ENCODE measurements at regions of chr19 and their contacts with region 1.

Region 1: GRCh38 chr19:45478454-45479238 is 10.8 kb downstream of the FOSB start:
- DNase-seq: peak; percentile 96
- H3K4me3 ChIP-seq: peak overlapping the region; percentile 51 to 67 (median 52)
- H3K27ac ChIP-seq: peak overlapping the region; percentile 91 to 92 (median 92)
- H3K4me1 ChIP-seq: peaks cover 10 to 16% (median 14%) of the 10 kb centered on the region in 4 donors
- H3K27me3 ChIP-seq: no peaks in the 10 kb centered on the region
- CTCF ChIP-seq: peak; percentile 97 to 100 (median 97)
- EP300 ChIP-seq: no peak
- POLR2A ChIP-seq: no peak

Region 2: GRCh38 chr19:45428384-45429231 is 50.0 kb before region 1 on chr19:
- intact Hi-C with region 1: loop called (anchors 2 kb)
- DNase-seq: no peak
- H3K4me3 ChIP-seq: peak overlapping the region; percentile 53 to 65 (median 59)
- H3K27ac ChIP-seq: peak overlapping the region; percentile 78 to 89 (median 86)
- H3K4me1 ChIP-seq: peaks cover 27 to 45% (median 41%) of the 10 kb centered on the region in 4 donors
- H3K27me3 ChIP-seq: no peaks in the 10 kb centered on the region
- CTCF ChIP-seq: peak; percentile 38 to 56 (median 41)
- EP300 ChIP-seq: no peak
- POLR2A ChIP-seq: peak; percentile 44

Region 3: GRCh38 chr19:45439569-45440254 is 38.9 kb before region 1 on chr19:
- intact Hi-C with region 1: loop called (anchors 2 kb)
- DNase-seq: peak; percentile 96
- H3K4me3 ChIP-seq: peak overlapping the region; percentile 66 to 84 (median 78)
- H3K27ac ChIP-seq: peak overlapping the region; percentile 92 to 96 (median 94)
- H3K4me1 ChIP-seq: peaks cover 22 to 42% (median 37%) of the 10 kb centered on the region in 4 donors
- H3K27me3 ChIP-seq: no peaks in the 10 kb centered on the region
- CTCF ChIP-seq: peak; percentile 97 to 100 (median 100)
- EP300 ChIP-seq: no peak
- POLR2A ChIP-seq: no peak